ENCODE measurements at regions of chr13 and their contacts with region 1.

Region 1: DNA sequence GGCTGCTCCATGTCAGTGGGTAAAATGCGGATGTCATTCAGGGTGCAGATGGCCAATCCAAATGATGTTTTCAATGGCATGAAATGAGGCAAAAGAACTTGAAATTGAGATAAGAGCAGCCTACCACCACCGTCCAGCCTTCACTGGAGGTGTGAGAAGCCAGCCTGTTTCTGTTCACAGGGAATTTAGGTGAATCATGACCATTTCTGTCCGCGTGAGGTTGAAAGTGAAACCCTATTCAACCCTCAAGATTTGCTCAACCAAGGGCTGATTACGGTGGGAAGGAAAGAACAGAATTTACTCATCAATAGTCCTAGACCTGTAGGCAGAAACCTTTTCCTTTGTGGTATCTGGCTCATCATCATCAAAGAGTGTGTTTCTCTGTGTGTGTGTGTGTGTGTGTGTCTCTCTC is 370.7 kb downstream of the COG6 start:
- DNase-seq: peak; percentile 67
- H3K4me3 Mint-ChIP-seq: peak overlapping the region; percentile 24
- H3K27ac Mint-ChIP-seq: peak overlapping the region; percentile 48
- H3K4me1 Mint-ChIP-seq: peaks cover 59% of the 10 kb centered on the region
- H3K27me3 Mint-ChIP-seq: peaks cover 5% of the 10 kb centered on the region

Region 2: DNA sequence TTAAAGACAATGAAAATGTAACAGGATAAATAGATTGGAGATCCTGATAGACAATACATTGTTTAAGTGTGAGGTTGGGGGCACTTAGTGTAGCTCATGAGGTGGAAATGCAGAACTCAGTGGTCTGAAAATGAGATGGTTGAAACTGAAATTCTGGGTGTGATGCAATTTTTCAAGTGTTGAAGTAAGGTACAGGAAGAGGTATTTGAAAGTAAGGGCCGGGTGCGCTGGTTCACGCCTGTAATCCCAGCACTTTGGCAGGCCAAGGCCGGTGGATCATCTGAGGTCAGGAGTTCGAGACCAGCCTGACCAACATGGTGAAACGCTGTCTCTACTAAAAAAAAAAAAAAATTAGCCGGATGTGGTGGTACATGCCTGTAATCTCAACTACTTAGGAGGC is 1563.6 kb before region 1 on chr13:
- intact Hi-C with region 1: no loop called
- DNase-seq: no peak
- H3K4me3 Mint-ChIP-seq: no peak overlapping the region
- H3K27ac Mint-ChIP-seq: no peak overlapping the region
- H3K4me1 Mint-ChIP-seq: no peaks in the 10 kb centered on the region
- H3K27me3 Mint-ChIP-seq: no peaks in the 10 kb centered on the region

Region 3: DNA sequence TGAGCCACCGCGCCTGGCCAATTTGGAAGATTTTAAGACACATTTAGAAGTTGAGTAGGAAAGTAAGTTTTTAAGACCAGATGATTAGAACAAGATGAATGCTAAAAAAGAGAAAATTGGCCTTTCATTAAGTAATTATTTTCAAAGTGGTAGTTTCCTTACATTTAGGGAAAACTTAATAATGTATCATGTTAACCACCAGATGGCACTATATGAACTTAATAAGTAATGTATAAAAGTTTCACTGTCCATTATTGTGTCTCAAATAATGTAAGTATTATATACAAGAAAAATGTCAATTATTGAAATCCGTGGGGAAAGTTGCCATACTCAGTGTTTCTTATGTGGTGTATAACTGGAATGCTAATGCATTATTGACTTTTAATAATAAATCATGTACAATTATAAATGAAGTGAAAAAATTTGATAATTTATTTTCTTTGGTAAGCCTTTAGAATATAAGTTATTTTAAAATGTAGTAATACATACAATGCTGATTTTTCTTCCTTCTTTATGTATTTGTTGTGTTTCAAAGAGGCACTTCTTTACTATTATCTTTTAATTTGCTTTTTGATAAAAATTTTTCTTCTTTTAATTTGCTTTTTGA is 341.5 kb before region 1 on chr13:
- intact Hi-C with region 1: loop called (anchors 2 kb)
- DNase-seq: no peak
- H3K4me3 Mint-ChIP-seq: no peak overlapping the region
- H3K27ac Mint-ChIP-seq: no peak overlapping the region
- H3K4me1 Mint-ChIP-seq: peaks cover 25% of the 10 kb centered on the region
- H3K27me3 Mint-ChIP-seq: no peaks in the 10 kb centered on the region

Region 4: GRCh38 chr13:40060296-40061007 is 34.3 kb after region 1 on chr13:
- intact Hi-C with region 1: loop called (anchors 1 kb)
- DNase-seq: no peak
- H3K4me3 Mint-ChIP-seq: no peak overlapping the region
- H3K27ac Mint-ChIP-seq: peak overlapping the region; percentile 37
- H3K4me1 Mint-ChIP-seq: peaks cover 49% of the 10 kb centered on the region
- H3K27me3 Mint-ChIP-seq: no peaks in the 10 kb centered on the region

Region 5: GRCh38 chr13:40149611-40150274 is 123.6 kb after region 1 on chr13:
- intact Hi-C with region 1: loop called (anchors 1 kb)
- DNase-seq: no peak
- H3K4me3 Mint-ChIP-seq: no peak overlapping the region
- H3K27ac Mint-ChIP-seq: no peak overlapping the region
- H3K4me1 Mint-ChIP-seq: peaks cover 67% of the 10 kb centered on the region
- H3K27me3 Mint-ChIP-seq: no peaks in the 10 kb centered on the region

Region 6: GRCh38 chr13:40371531-40372125 is 345.4 kb after region 1 on chr13:
- intact Hi-C with region 1: loop called (anchors 5 kb)
- DNase-seq: no peak
- H3K4me3 Mint-ChIP-seq: peak overlapping the region; percentile 1
- H3K27ac Mint-ChIP-seq: peak overlapping the region; percentile 67
- H3K4me1 Mint-ChIP-seq: peaks cover 46% of the 10 kb centered on the region
- H3K27me3 Mint-ChIP-seq: no peaks in the 10 kb centered on the region

Region 7: GRCh38 chr13:40399803-40400202 is 373.6 kb after region 1 on chr13:
- intact Hi-C with region 1: no loop called
- DNase-seq: no peak
- H3K4me3 Mint-ChIP-seq: no peak overlapping the region
- H3K27ac Mint-ChIP-seq: no peak overlapping the region
- H3K4me1 Mint-ChIP-seq: peaks cover 22% of the 10 kb centered on the region
- H3K27me3 Mint-ChIP-seq: no peaks in the 10 kb centered on the region

Region 8: GRCh38 chr13:40528881-40529280 is 502.7 kb after region 1 on chr13:
- intact Hi-C with region 1: no loop called
- DNase-seq: no peak
- H3K4me3 Mint-ChIP-seq: no peak overlapping the region
- H3K27ac Mint-ChIP-seq: no peak overlapping the region
- H3K4me1 Mint-ChIP-seq: peaks cover 10% of the 10 kb centered on the region
- H3K27me3 Mint-ChIP-seq: no peaks in the 10 kb centered on the region

Region 9: DNA sequence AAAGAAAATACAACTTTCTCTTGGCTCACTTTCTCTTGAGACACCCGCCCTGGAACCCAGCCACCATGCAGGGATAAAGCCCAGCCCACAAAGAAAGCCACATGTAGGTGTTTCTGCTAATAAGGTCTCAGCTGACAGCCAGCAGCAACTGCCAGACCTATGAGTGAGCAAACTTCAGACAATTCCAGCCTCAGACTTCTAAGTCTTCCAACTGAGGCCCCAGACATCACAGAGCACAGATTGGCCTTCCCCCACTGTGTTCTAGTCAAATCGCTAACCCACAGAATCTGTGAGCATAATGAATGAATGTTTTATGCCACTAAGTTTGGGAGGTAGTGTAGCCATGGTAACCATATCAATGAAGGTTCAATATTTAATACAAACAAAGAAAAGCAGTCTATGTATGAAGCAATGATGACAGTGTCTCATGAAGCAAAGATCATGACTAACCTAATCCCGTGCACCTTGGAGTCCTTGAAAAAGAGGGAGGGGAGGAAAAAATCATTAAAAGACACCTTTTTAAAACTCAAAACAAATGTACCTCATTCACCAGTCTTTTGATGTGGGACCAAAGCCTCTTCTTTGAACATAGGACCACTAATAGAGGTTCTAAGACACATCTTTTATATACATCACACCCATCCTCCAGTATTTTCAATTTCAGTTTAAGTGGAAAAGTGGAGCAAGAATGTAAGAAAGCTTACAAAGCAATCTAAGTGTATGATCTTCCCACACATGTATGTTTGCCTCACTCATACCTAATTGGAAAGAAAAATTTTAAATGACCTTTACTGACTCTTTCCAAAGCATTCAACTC is 738.6 kb after region 1 on chr13:
- intact Hi-C with region 1: loop called (anchors 1 kb)
- DNase-seq: no peak
- H3K4me3 Mint-ChIP-seq: peak overlapping the region; percentile 23
- H3K27ac Mint-ChIP-seq: peak overlapping the region; percentile 88
- H3K4me1 Mint-ChIP-seq: peaks cover 39% of the 10 kb centered on the region
- H3K27me3 Mint-ChIP-seq: no peaks in the 10 kb centered on the region